ENCODE measurements at regions of chr7 and their contacts with region 1.

Region 1: GRCh38 chr7:42198974-42199668 is 37.9 kb downstream of the GLI3 start:
- DNase-seq: no peak
- H3K4me3 ChIP-seq: no peak overlapping the region
- H3K27ac ChIP-seq: no peak overlapping the region
- H3K4me1 ChIP-seq: peaks cover 23% of the 10 kb centered on the region
- H3K27me3 ChIP-seq: no peaks in the 10 kb centered on the region
- CTCF ChIP-seq: no peak
- EP300 ChIP-seq: no peak
- POLR2A ChIP-seq: no peak

Region 2: DNA sequence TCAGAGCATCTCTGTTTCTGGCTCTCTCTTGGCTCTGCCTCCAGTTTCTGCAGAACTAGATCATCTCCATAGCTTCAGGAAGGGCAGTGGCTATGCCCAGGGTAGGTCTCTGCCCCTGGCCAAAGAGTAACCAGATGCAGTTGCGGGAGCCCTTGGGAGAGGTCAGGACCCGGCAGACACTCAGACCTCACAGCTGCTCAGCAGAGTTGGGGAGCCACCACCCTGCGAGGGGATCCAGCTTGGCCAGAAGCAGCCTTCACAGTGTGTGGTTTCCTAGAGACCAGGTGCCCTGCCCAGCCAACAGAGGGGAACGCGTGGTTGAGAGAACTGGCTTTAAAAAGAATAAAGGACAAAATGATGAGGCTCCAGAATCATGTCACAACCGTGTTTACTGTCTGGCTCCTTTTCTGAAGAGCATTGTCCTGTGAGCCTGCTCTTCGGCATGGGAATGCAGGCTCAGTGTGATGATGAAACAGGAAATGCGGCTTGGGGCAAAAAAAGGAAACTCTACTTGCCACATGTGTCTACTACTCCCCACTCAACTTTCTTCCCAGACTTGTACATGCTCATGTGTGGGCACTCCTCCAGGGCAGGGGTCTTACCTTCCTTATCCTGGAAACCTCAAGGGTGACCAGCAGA is 739.4 kb before region 1 on chr7:
- intact Hi-C with region 1: no loop called
- DNase-seq: no peak
- H3K4me3 ChIP-seq: no peak overlapping the region
- H3K27ac ChIP-seq: no peak overlapping the region
- H3K4me1 ChIP-seq: no peaks in the 10 kb centered on the region
- H3K27me3 ChIP-seq: no peaks in the 10 kb centered on the region
- CTCF ChIP-seq: no peak
- EP300 ChIP-seq: no peak
- POLR2A ChIP-seq: no peak

Region 3: GRCh38 chr7:42237162-42237821 is 38.2 kb after region 1 on chr7 and contains the start of gene GLI3:
- intact Hi-C with region 1: loop called in 1 of 4 experiments (anchors 5 kb)
- DNase-seq: peak; percentile 89 to 92 (median 90)
- H3K4me3 ChIP-seq: peak within 1 kb of the TSS; percentile 64
- H3K27ac ChIP-seq: peak within 1 kb of the TSS; percentile 94 to 98
- H3K4me1 ChIP-seq: peaks cover 1% of the 10 kb centered on the region
- H3K27me3 ChIP-seq: no peaks in the 10 kb centered on the region
- CTCF ChIP-seq: peak in 1 of 3 donors; percentile 41
- EP300 ChIP-seq: peak; percentile 24
- POLR2A ChIP-seq: peak; percentile 55
- total RNA-seq, gene GLI3: 10.3 to 67.1 (median 54.2) TPM

Measured in ovary (tissue), 10 donors.